ENCODE measurements at regions of chr1 and their contacts with region 1.

Region 1: DNA sequence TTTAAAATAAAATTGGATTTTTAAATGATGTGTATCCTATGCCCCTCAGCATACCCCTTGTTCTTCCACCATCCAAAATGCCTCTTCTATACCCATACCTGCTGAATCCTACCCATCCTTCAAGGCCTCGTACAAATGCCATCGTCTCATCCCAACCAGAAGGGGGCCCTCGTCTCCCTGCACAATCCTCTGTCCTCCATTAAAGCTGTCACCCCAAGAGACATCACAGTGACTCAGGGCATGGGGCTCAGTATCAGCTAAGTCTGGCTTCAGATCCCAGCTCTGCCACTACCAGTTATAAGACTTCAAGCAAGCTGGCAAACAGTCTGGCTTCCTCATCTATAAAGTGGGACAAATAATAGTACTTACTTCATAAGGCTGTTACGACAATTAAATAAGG is 23.8 kb downstream of the IGFN1 start:
- DNase-seq: no peak
- ATAC-seq: no peak
- H3K4me3 ChIP-seq: no peak overlapping the region
- H3K27ac ChIP-seq: no peak overlapping the region
- H3K4me1 ChIP-seq: no peaks in the 10 kb centered on the region
- H3K27me3 ChIP-seq: peaks cover 0 to 25% (median 10%) of the 10 kb centered on the region in 7 donors
- CTCF ChIP-seq: no peak

Region 2: DNA sequence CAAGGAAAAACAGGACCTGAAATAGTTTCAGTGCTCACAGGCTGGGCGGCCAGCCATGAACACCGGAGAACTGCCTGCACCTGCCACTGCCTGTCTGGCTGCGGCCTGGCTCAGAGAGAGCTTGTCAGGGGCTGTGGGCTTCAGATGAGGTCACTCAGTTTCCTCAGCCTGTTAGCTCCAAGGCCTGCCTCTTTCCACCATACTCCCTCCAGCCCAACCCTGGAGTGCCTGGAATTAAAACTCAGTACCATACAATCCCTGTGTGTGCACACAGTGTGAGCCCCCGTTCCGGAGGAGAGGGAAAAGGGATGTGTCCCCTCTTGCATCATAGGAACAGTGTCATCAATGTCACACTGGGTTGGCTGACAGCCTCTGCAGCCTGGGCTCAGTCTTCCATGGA is 118.4 kb before region 1 on chr1:
- intact Hi-C with region 1: loop called in 1 of 10 experiments (anchors 10 kb)
- DNase-seq: no peak
- ATAC-seq: no peak
- H3K4me3 ChIP-seq: no peak overlapping the region
- H3K27ac ChIP-seq: no peak overlapping the region
- H3K4me1 ChIP-seq: no peaks in the 10 kb centered on the region
- H3K27me3 ChIP-seq: peaks cover 0 to 8% (median 0%) of the 10 kb centered on the region in 7 donors
- CTCF ChIP-seq: no peak